ENCODE measurements at regions of chr16 and their contacts with region 1.

Region 1: GRCh38 chr16:24918641-24919040 is 72.9 kb downstream of the SLC5A11 start:
- DNase-seq: no peak
- ATAC-seq: no peak
- H3K4me3 ChIP-seq: no peak overlapping the region
- H3K4me3 Mint-ChIP-seq: no peak overlapping the region
- H3K27ac ChIP-seq: no peak overlapping the region
- H3K27ac Mint-ChIP-seq: no peak overlapping the region
- H3K4me1 ChIP-seq: no peaks in the 10 kb centered on the region
- H3K4me1 Mint-ChIP-seq: peaks cover 0 to 11% (median 0%) of the 10 kb centered on the region in 7 donors
- H3K27me3 ChIP-seq: no peaks in the 10 kb centered on the region
- H3K27me3 Mint-ChIP-seq: no peaks in the 10 kb centered on the region

Region 2: GRCh38 chr16:24516900-24517669 is 401.6 kb before region 1 on chr16:
- CTCF ChIA-PET with region 1: no interaction called
- POLR2A ChIA-PET with region 1: no interaction called
- intact Hi-C with region 1: loop called in 1 of 2 experiments (anchors 10 kb)
- DNase-seq: peak; percentile 46 to 75 (median 68)
- ATAC-seq: peak; percentile 91
- H3K4me3 ChIP-seq: no peak overlapping the region
- H3K4me3 Mint-ChIP-seq: peak overlapping the region in 8 of 10 donors; percentile 14 to 71 (median 44)
- H3K27ac ChIP-seq: no peak overlapping the region
- H3K27ac Mint-ChIP-seq: peak overlapping the region in 3 of 9 donors; percentile 1 to 88 (median 5)
- H3K4me1 ChIP-seq: no peaks in the 10 kb centered on the region
- H3K4me1 Mint-ChIP-seq: peaks cover 4 to 14% (median 6%) of the 10 kb centered on the region in 7 donors
- H3K27me3 ChIP-seq: no peaks in the 10 kb centered on the region
- H3K27me3 Mint-ChIP-seq: peaks cover 0 to 7% (median 0%) of the 10 kb centered on the region in 5 donors

Region 3: DNA sequence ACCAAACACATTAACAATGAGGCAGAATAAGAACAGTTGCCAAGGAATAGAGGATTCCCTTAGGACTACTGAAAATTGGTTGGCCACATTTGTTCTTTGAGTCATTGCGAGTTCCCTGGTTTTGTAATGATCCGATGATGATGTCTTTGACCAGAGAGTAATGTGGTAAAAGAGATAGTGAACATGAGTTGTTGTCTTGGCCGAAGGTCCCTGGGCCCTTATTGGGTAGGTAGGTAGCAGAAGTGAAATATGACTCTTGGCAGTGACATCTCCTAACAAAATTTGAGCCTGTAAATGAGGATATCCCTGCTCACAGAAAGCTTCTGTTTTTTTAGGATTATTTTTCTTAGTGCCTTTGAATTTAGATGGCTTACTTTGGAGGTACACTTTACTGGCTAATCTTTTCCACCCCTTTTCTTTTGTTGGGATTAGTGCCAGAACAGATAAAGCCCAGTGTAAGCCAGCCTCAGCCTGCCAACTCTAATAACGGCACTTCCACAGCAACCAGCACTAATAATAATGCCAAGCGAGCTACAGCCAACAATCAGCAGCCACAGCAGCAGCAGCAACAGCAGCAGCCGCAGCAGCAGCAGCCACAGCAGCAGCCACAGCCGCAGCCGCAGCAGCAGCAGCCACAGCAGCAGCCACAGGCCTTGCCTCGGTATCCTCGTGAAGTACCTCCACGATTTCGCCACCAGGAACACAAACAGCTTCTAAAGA is 142.0 kb before region 1 on chr16:
- CTCF ChIA-PET with region 1: no interaction called
- POLR2A ChIA-PET with region 1: no interaction called
- intact Hi-C with region 1: no loop called
- DNase-seq: no peak
- ATAC-seq: no peak
- H3K4me3 ChIP-seq: no peak overlapping the region
- H3K4me3 Mint-ChIP-seq: no peak overlapping the region
- H3K27ac ChIP-seq: no peak overlapping the region
- H3K27ac Mint-ChIP-seq: peak overlapping the region in 3 of 9 donors; percentile 8 to 87 (median 20)
- H3K4me1 ChIP-seq: no peaks in the 10 kb centered on the region
- H3K4me1 Mint-ChIP-seq: peaks cover 0 to 44% (median 28%) of the 10 kb centered on the region in 7 donors
- H3K27me3 ChIP-seq: no peaks in the 10 kb centered on the region
- H3K27me3 Mint-ChIP-seq: no peaks in the 10 kb centered on the region

Measured in naive thymus-derived CD4-positive, alpha-beta T cell (primary cell).